ENCODE measurements at regions of chr2 and their contacts with region 1.

Region 1: DNA sequence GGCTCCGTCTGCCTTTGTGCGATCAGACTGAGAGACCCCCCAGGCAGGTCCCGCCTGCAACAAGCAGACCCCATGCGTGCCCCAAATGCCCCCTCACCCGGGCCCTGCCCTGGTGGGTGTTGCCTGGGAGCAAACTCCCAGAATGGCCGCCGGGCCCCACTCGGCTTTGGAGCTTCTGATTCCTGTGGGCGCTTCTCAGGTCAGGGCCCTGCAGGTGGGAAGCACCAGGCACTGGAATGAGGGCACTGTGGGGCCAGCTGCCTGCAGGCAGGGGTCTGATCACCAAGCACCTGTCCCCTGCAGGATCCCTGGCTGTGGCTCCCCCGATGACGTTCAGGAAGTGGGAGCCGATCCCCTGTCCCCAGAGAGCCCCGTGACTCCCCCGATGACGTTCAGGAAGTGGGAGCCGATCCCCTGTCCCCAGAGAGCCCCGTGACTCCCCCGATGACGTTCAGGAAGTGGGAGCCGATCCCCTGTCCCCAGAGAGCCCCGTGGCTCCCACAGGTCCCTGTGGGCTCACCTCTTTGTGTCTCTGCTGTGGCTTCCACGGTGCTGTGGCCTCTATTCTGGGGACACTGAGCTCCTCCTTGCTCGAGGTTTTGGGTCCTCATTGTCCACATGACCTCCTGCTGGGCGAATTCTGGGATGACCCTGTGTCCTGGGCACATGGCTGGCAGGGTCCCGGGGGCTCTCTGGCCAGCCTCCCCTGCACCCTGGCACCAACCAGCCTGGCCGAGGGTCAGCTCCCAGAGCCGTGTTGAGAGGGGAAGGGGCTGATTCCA is 4.7 kb downstream of the NEU4 start:
- DNase-seq: no peak
- H3K4me3 Mint-ChIP-seq: no peak overlapping the region
- H3K27ac Mint-ChIP-seq: peak overlapping the region; percentile 52
- H3K4me1 Mint-ChIP-seq: peaks cover 7% of the 10 kb centered on the region
- H3K27me3 Mint-ChIP-seq: no peaks in the 10 kb centered on the region

Region 2: GRCh38 chr2:241774646-241775222 is 38.9 kb before region 1 on chr2:
- intact Hi-C with region 1: no loop called
- DNase-seq: no peak
- H3K4me3 Mint-ChIP-seq: no peak overlapping the region
- H3K27ac Mint-ChIP-seq: no peak overlapping the region
- H3K4me1 Mint-ChIP-seq: peaks cover 5% of the 10 kb centered on the region
- H3K27me3 Mint-ChIP-seq: no peaks in the 10 kb centered on the region

Region 3: GRCh38 chr2:241797441-241798080 is 16.1 kb before region 1 on chr2:
- intact Hi-C with region 1: loop called (anchors 2 kb)
- DNase-seq: no peak
- H3K4me3 Mint-ChIP-seq: no peak overlapping the region
- H3K27ac Mint-ChIP-seq: no peak overlapping the region
- H3K4me1 Mint-ChIP-seq: no peaks in the 10 kb centered on the region
- H3K27me3 Mint-ChIP-seq: no peaks in the 10 kb centered on the region

Region 4: GRCh38 chr2:241827394-241827793 is 13.7 kb after region 1 on chr2:
- intact Hi-C with region 1: no loop called
- DNase-seq: no peak
- H3K4me3 Mint-ChIP-seq: no peak overlapping the region
- H3K27ac Mint-ChIP-seq: no peak overlapping the region
- H3K4me1 Mint-ChIP-seq: peaks cover 3% of the 10 kb centered on the region
- H3K27me3 Mint-ChIP-seq: peaks cover 18% of the 10 kb centered on the region